MCF 10A (cell line): ENCODE measurements at regions of chr19 and their contacts with region 1.

Region 1: GRCh38 chr19:4867534-4868285 is at the start of gene PLIN3:
- DNase-seq: peak; percentile 97
- H3K4me3 Mint-ChIP-seq: peak within 1 kb of the TSS; percentile 80
- H3K27ac Mint-ChIP-seq: peak within 1 kb of the TSS; percentile 90
- H3K4me1 Mint-ChIP-seq: peaks cover 10% of the 10 kb centered on the region
- H3K27me3 Mint-ChIP-seq: no peaks in the 10 kb centered on the region
- CTCF ChIP-seq: no peak
- total RNA-seq, gene PLIN3: 64.3 and 71.7 TPM in 2 replicates

Region 2: DNA sequence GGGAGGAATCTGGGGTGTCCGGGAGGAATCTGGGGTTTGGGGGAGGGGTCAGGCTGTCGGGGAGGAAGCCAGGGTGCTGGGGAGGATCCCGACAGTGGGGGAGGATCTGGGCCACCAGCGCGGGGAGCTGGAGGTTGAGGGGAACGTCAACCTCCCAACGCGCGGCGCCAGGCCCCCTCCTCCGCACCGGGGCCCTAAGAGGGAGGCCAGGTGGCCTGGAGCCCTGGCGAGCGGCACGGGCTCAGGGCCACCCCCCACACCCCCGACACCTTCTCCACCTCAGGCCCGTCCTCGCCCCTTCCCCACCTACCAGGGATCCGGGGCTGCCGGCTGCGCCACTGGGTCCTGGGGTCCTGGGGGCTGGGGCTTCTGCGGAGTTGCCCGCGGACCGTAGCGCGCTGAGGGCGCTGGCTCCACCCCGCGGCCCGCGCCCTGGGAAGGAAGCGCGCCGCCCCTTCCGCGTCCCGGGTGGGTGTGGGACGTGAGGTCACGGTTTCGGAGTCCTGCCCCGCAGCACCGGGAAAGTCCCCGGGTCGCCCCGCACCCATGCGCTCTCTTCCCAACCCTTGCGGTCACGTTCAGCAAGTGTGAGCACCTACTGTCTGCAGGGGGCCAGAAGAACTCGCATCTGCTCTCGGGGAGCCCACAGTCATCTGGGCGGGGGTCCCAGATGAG is 36.3 kb before region 1 on chr19 and contains the start of gene TICAM1:
- CTCF ChIA-PET with region 1: interaction called, 3 read pairs
- POLR2A ChIA-PET with region 1: interaction called, 22 read pairs
- intact Hi-C with region 1: no loop called
- DNase-seq: peak; percentile 71
- H3K4me3 Mint-ChIP-seq: peak within 1 kb of the TSS; percentile 81
- H3K27ac Mint-ChIP-seq: peak within 1 kb of the TSS; percentile 94
- H3K4me1 Mint-ChIP-seq: peaks cover 9% of the 10 kb centered on the region
- H3K27me3 Mint-ChIP-seq: no peaks in the 10 kb centered on the region
- CTCF ChIP-seq: no peak
- total RNA-seq, gene TICAM1: 24.2 and 25.6 TPM in 2 replicates

Region 3: GRCh38 chr19:4851551-4852290 is 16.0 kb before region 1 on chr19:
- CTCF ChIA-PET with region 1: interaction called, 10 read pairs
- POLR2A ChIA-PET with region 1: no interaction called
- intact Hi-C with region 1: no loop called
- DNase-seq: peak; percentile 56
- H3K4me3 Mint-ChIP-seq: no peak overlapping the region
- H3K27ac Mint-ChIP-seq: no peak overlapping the region
- H3K4me1 Mint-ChIP-seq: no peaks in the 10 kb centered on the region
- H3K27me3 Mint-ChIP-seq: no peaks in the 10 kb centered on the region
- CTCF ChIP-seq: peak; percentile 69